MCF 10A (cell line): ENCODE measurements at regions of chr20 and their contacts with region 1.

Region 1: DNA sequence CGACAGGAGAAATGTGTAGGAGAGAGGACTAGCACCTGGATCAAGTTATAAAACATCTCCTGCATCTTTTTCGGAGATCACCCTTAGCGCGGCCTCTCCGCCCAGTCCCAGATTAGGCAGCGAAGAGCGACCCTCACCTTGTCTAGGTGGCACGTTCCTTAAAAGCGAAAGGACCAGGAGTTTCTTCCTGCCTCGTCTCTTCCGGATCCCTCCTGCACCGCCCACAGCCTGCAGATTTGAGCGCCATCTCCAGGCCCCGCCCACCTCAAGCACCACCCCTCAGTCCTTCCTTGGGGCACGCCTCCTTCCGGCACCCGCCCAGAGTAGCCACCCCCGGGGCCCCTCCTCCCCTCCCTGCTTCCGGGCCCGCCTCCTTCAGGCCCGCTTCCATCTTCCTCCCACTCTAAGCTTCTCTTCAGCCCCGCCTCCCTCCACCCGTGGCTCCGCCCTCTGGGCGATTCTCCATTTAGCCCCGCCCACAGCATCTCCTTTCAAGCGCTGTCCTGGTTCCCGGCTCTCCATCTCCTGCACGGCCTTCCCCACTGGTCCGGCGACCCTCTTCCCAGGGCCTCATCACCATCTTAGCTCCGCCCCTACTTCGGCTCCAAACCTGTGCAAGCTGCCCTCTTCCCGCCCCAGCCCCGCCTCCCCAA is 662 bp upstream of the RALY start:
- DNase-seq: peak; percentile 98
- H3K4me3 Mint-ChIP-seq: peak overlapping the region; percentile 95
- H3K27ac Mint-ChIP-seq: peak overlapping the region; percentile 96
- H3K4me1 Mint-ChIP-seq: peaks cover 16% of the 10 kb centered on the region
- H3K27me3 Mint-ChIP-seq: no peaks in the 10 kb centered on the region
- CTCF ChIP-seq: no peak

Region 2: DNA sequence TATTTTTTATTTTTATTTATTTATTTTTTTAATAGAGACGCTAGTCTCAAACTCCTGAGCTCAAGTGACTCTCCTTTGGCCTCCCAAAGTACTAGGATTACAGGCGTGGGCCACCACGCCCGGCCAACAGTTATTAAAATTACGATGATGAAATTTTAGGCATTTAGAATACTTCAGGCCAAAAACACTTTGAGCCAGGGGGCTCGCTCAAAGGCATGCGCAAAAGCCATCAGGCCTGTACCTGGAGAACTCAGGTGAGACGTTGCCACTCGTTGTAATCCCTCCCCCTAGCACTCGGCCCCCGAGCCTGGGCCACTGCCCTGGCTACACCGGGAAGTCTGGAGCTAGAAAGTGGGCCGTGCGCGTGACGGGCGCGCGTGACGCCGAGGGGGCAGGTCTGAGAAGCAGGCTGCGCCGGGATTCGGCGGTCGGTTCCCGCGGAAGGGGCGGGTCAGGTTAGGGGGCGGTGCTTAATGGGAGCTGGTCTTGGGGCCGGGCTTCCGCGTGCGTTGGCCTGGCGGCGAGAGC is 503.5 kb before region 1 on chr20:
- CTCF ChIA-PET with region 1: no interaction called
- POLR2A ChIA-PET with region 1: interaction called, 21 read pairs
- intact Hi-C with region 1: no loop called
- DNase-seq: peak; percentile 96
- H3K4me3 Mint-ChIP-seq: peak overlapping the region; percentile 83
- H3K27ac Mint-ChIP-seq: peak overlapping the region; percentile 75
- H3K4me1 Mint-ChIP-seq: no peaks in the 10 kb centered on the region
- H3K27me3 Mint-ChIP-seq: no peaks in the 10 kb centered on the region
- CTCF ChIP-seq: no peak

Region 3: DNA sequence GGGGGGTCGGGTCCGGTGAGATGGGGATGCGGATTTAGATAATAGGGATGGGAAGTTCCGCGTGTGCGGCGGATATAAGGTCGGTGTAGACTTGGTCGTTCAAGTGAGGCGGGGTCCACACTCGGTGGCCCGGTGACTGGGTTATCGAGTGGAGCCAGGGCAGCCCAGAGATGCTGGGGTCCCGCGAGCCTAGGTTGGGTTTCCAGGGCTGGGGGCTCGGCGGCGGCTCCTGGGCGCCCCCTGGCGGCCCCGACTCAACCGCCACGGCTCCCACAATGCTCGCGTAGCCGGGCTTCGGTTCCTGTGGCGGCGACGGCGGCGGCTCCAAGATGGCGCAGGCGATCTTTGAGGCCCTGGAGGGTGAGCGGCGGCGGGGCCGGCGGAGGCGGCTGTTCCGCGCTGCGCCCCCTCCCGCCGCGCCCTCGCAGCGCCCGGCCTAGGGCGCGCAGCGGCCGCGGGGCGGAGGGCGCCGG is 261.3 kb before region 1 on chr20 and contains the start of gene ZNF341:
- CTCF ChIA-PET with region 1: no interaction called
- POLR2A ChIA-PET with region 1: interaction called, 13 read pairs
- intact Hi-C with region 1: loop called (anchors 2 kb)
- DNase-seq: peak; percentile 79
- H3K4me3 Mint-ChIP-seq: peak within 1 kb of the TSS; percentile 86
- H3K27ac Mint-ChIP-seq: peak within 1 kb of the TSS; percentile 91
- H3K4me1 Mint-ChIP-seq: peaks cover 20% of the 10 kb centered on the region
- H3K27me3 Mint-ChIP-seq: no peaks in the 10 kb centered on the region
- CTCF ChIP-seq: peak; percentile 82
- total RNA-seq, gene ZNF341: 2.0 and 2.5 TPM in 2 replicates

Region 4: GRCh38 chr20:33810885-33811777 is 181.9 kb before region 1 on chr20 and contains the start of gene CHMP4B:
- CTCF ChIA-PET with region 1: no interaction called
- POLR2A ChIA-PET with region 1: interaction called, 122 read pairs
- intact Hi-C with region 1: no loop called
- DNase-seq: peak; percentile 99
- H3K4me3 Mint-ChIP-seq: peak within 1 kb of the TSS; percentile 93
- H3K27ac Mint-ChIP-seq: peak within 1 kb of the TSS; percentile 100
- H3K4me1 Mint-ChIP-seq: peaks cover 19% of the 10 kb centered on the region
- H3K27me3 Mint-ChIP-seq: no peaks in the 10 kb centered on the region
- CTCF ChIP-seq: no peak
- total RNA-seq, gene CHMP4B: 77.6 and 95.2 TPM in 2 replicates

Region 5: DNA sequence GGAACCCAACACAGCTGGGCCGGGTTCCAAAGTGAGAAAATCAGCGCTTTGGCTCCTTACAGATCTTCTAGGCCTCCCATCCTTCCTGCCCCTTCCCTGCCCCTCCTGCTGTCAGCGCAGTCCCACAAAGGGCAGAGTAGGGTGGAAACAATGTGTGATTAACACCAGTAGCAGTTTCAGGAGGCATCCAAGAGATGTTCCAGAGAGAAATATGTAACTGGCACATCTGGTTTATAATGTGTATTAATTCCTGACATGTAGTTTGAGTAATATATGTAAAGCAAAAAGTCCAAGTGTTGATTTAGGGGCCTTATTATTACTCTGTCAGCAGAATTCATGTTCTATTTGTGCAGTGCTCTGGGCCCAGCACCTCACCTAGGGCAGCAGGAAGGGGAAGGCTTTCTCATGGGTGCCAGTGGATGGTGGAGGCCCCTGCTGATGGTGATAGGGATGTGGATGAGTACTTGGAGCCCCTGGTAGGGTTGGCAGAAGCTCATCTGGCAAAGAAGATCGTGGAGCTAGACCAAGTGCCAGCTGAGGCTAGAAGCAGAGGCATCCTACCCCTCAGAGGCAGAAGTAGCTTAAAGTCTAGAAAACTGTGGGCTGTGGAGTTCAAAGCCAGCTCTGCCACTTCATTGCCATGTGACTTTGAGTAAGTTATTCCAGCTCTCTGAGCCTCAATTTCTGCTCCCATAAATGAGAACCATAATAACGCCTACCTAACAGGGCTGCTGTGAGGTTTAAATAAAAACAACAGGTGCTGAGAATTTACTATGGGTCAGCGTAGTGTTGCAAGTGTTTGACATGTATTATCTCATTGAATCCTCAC is 21.7 kb before region 1 on chr20:
- CTCF ChIA-PET with region 1: no interaction called
- POLR2A ChIA-PET with region 1: interaction called, 10 read pairs
- intact Hi-C with region 1: no loop called
- DNase-seq: no peak
- H3K4me3 Mint-ChIP-seq: no peak overlapping the region
- H3K27ac Mint-ChIP-seq: no peak overlapping the region
- H3K4me1 Mint-ChIP-seq: no peaks in the 10 kb centered on the region
- H3K27me3 Mint-ChIP-seq: no peaks in the 10 kb centered on the region
- CTCF ChIP-seq: no peak

Region 6: GRCh38 chr20:34069341-34070078 is 76.5 kb after region 1 on chr20:
- CTCF ChIA-PET with region 1: interaction called, 5 read pairs
- POLR2A ChIA-PET with region 1: interaction called, 19 read pairs
- intact Hi-C with region 1: loop called (anchors 10 kb)
- DNase-seq: peak; percentile 85
- H3K4me3 Mint-ChIP-seq: no peak overlapping the region
- H3K27ac Mint-ChIP-seq: no peak overlapping the region
- H3K4me1 Mint-ChIP-seq: peaks cover 21% of the 10 kb centered on the region
- H3K27me3 Mint-ChIP-seq: no peaks in the 10 kb centered on the region
- CTCF ChIP-seq: peak; percentile 88